CD4-positive, alpha-beta memory T cell (primary cell): ENCODE measurements at regions of chr2 and their contacts with region 1.

Region 1: DNA sequence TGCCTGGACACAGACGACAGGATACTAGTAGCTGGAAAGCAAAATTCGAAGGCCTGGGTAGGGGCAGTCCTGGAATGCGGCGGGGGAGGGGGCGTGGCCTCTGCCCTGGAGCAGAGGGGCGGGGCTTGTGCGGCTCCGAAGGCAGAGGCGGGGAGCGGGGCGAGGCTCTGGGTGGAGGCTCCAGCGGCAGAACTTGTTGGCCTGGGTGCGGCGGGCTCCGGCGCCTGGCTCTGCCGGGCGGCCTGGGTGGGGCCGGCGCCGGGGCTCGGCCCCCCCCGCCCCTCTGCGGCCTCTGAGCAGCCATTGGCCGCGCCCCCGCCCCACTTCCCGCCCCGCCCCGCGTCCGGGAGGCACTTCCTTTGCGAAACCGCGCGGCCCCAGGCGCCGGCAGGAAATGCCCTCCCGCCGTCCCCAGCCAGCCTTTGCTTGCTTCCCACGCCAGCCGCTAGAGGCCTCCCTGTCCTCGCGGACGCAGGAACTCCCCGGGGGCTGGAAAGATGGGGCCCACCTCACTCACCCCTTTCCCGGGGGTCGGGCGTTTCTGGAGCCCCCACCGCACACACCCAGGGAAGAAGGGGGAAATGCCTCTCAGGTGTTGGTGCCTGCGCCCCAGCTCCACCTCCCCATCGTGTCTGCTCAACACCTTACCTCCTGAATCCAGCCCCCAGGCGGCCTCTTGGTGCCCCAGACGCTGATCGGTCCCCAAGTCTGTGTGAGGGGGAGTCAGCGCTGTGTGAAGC is 6.7 kb downstream of the CTDSP1 start:
- DNase-seq: peak; percentile 88 to 92 (median 91)
- H3K4me3 ChIP-seq: peak overlapping the region; percentile 34 to 63
- H3K4me3 Mint-ChIP-seq: peak overlapping the region; percentile 80 to 91 (median 87)
- H3K27ac ChIP-seq: peak overlapping the region; percentile 71
- H3K27ac Mint-ChIP-seq: peak overlapping the region; percentile 93 to 100 (median 96)
- H3K4me1 ChIP-seq: peaks cover 62% of the 10 kb centered on the region
- H3K4me1 Mint-ChIP-seq: peaks cover 32 to 67% (median 50%) of the 10 kb centered on the region in 4 donors
- H3K27me3 ChIP-seq: no peaks in the 10 kb centered on the region
- H3K27me3 Mint-ChIP-seq: no peaks in the 10 kb centered on the region

Region 2: GRCh38 chr2:218003981-218004419 is 402.4 kb before region 1 on chr2:
- CTCF ChIA-PET with region 1: no interaction called
- POLR2A ChIA-PET with region 1: no interaction called
- intact Hi-C with region 1: no loop called
- DNase-seq: no peak
- H3K4me3 ChIP-seq: no peak overlapping the region
- H3K4me3 Mint-ChIP-seq: no peak overlapping the region
- H3K27ac ChIP-seq: no peak overlapping the region
- H3K27ac Mint-ChIP-seq: no peak overlapping the region
- H3K4me1 ChIP-seq: no peaks in the 10 kb centered on the region
- H3K4me1 Mint-ChIP-seq: peaks cover 0 to 4% (median 0%) of the 10 kb centered on the region in 4 donors
- H3K27me3 ChIP-seq: no peaks in the 10 kb centered on the region
- H3K27me3 Mint-ChIP-seq: peaks cover 5 to 19% of the 10 kb centered on the region in 2 donors

Region 3: GRCh38 chr2:218292048-218293014 is 114.0 kb before region 1 on chr2 and contains the start of gene TMBIM1:
- CTCF ChIA-PET with region 1: no interaction called
- POLR2A ChIA-PET with region 1: interaction called, 42 read pairs
- intact Hi-C with region 1: no loop called
- DNase-seq: peak; percentile 73 to 86 (median 83)
- H3K4me3 ChIP-seq: peak within 1 kb of the TSS; percentile 74 to 78
- H3K4me3 Mint-ChIP-seq: peak within 1 kb of the TSS; percentile 90 to 97 (median 96)
- H3K27ac ChIP-seq: peak within 1 kb of the TSS; percentile 94
- H3K27ac Mint-ChIP-seq: peak within 1 kb of the TSS; percentile 98 to 100 (median 99)
- H3K4me1 ChIP-seq: peaks cover 56% of the 10 kb centered on the region
- H3K4me1 Mint-ChIP-seq: peaks cover 32 to 75% (median 51%) of the 10 kb centered on the region in 4 donors
- H3K27me3 ChIP-seq: no peaks in the 10 kb centered on the region
- H3K27me3 Mint-ChIP-seq: no peaks in the 10 kb centered on the region
- total RNA-seq, gene TMBIM1: 140 to 144 TPM

Region 4: DNA sequence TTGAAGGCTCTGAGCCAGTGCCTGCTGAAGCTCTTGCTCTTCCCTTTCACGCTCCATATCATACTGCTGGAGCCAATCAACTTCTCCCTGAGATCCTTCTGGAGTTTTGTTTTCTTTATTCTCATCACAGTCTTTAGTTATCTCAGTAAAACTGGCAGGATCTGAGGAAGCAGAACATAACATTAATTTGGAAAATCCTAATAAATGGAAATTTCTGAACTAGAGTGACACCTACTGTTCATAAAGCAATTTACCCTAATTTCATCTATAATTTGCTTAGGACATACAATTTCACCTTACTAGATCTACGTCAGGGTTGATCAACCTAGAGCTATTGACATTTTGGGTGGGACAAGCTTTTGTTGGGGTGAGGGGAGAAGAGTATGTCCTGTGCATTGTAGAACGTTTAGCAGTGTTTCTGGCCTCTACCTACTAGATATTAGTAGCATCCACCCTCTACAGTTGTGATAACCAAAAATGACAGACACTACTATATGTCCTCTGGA is 59.7 kb after region 1 on chr2:
- CTCF ChIA-PET with region 1: interaction called, 10 read pairs
- POLR2A ChIA-PET with region 1: interaction called, 4 read pairs
- intact Hi-C with region 1: loop called (anchors 1 kb)
- DNase-seq: peak in 4 of 5 donors; percentile 11 to 15 (median 14)
- H3K4me3 ChIP-seq: no peak overlapping the region
- H3K4me3 Mint-ChIP-seq: no peak overlapping the region
- H3K27ac ChIP-seq: no peak overlapping the region
- H3K27ac Mint-ChIP-seq: peak overlapping the region in 6 of 7 donors; percentile 20 to 78 (median 47)
- H3K4me1 ChIP-seq: peaks cover 7% of the 10 kb centered on the region
- H3K4me1 Mint-ChIP-seq: peaks cover 6 to 12% (median 8%) of the 10 kb centered on the region in 4 donors
- H3K27me3 ChIP-seq: no peaks in the 10 kb centered on the region
- H3K27me3 Mint-ChIP-seq: no peaks in the 10 kb centered on the region

Region 5: DNA sequence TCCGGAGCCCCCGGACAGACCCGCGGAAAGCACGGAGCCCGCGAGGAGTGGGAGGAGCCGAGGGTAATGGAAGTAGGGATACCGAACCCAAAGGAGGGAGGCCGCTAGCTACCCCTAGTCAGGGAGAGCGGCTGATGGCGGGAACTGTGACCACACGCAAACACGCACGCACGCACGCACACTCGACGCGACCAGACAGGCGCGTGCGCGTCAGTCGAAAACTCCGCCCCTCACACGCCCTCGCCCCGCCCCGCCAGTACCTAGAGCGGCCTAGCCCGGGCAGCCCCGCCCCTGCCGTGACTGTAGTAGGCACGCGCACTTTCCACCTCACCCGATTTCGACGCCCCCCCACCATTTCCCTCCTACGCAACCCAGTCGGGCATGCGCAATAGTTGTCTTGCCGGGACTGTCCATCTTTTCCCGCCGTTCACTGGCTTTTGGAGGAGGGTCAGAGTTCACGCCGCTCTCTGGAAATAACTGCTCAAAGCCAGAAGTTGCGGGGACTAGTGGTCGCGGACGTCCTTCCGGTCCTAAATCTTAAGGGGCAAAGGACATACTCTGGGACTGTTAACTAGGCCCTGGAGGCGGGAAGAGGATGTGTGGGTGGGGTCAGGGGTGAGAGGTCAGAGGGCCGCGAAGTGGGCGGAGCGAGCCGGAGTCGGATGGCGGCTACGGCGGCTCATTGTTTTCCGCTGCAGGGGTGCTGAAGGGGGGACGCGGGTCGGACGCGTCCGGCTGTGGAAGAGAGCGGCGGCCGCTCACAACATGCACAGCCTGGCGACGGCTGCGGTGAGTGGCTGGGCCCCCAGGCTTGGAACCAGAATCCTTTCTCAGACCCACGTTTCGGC is 162.0 kb after region 1 on chr2 and contains the starts of genes CNOT9 and USP37:
- CTCF ChIA-PET with region 1: no interaction called
- POLR2A ChIA-PET with region 1: interaction called, 5 read pairs
- intact Hi-C with region 1: loop called (anchors 1 kb)
- DNase-seq: peak; percentile 99 to 100 (median 100)
- H3K4me3 ChIP-seq: peak within 1 kb of the TSS; percentile 67 to 84
- H3K4me3 Mint-ChIP-seq: peak within 1 kb of the TSS; percentile 90 to 99 (median 97)
- H3K27ac ChIP-seq: peak within 1 kb of the TSS; percentile 99
- H3K27ac Mint-ChIP-seq: peak within 1 kb of the TSS; percentile 96 to 100 (median 100)
- H3K4me1 ChIP-seq: peaks cover 43% of the 10 kb centered on the region
- H3K4me1 Mint-ChIP-seq: peaks cover 48 to 78% (median 57%) of the 10 kb centered on the region in 4 donors
- H3K27me3 ChIP-seq: no peaks in the 10 kb centered on the region
- H3K27me3 Mint-ChIP-seq: no peaks in the 10 kb centered on the region
- total RNA-seq, gene CNOT9: 53.9 to 58.0 TPM
- total RNA-seq, gene USP37: 28.2 to 29.1 TPM

Region 6: GRCh38 chr2:218659258-218659987 is 253.0 kb after region 1 on chr2 and contains the starts of genes BCS1L and ZNF142:
- CTCF ChIA-PET with region 1: no interaction called
- POLR2A ChIA-PET with region 1: interaction called, 13 read pairs
- intact Hi-C with region 1: no loop called
- DNase-seq: peak; percentile 90 to 94 (median 92)
- H3K4me3 ChIP-seq: peak within 1 kb of the TSS; percentile 50 to 78
- H3K4me3 Mint-ChIP-seq: peak within 1 kb of the TSS; percentile 91 to 100 (median 93)
- H3K27ac ChIP-seq: peak within 1 kb of the TSS; percentile 71
- H3K27ac Mint-ChIP-seq: peak within 1 kb of the TSS; percentile 92 to 98 (median 94)
- H3K4me1 ChIP-seq: peaks cover 28% of the 10 kb centered on the region
- H3K4me1 Mint-ChIP-seq: peaks cover 17 to 37% (median 31%) of the 10 kb centered on the region in 4 donors
- H3K27me3 ChIP-seq: no peaks in the 10 kb centered on the region
- H3K27me3 Mint-ChIP-seq: no peaks in the 10 kb centered on the region
- total RNA-seq, gene BCS1L: 53.0 to 57.2 TPM
- total RNA-seq, gene ZNF142: 44.4 to 54.5 TPM

Region 7: DNA sequence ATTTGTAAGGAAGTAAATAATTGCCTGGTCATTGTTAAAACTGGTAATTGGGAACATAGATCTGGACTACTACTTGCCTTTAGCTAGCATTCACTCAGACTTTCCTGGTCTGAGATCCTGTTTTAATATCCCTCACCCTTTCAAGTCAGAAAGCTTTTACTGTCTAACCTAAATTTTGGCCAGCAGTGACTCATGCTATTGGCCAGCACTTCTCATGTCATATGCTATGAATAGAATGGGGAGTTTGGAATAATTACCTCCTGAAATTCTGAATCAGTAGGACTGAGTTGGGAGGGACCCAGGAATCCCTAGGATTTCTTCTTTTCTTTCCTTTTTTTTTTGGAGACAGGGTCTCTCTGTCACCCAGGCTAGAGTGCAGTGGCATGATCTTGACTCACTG is 284.9 kb after region 1 on chr2:
- CTCF ChIA-PET with region 1: interaction called, 3 read pairs
- POLR2A ChIA-PET with region 1: no interaction called
- intact Hi-C with region 1: loop called (anchors 5 kb)
- DNase-seq: no peak
- H3K4me3 ChIP-seq: no peak overlapping the region
- H3K4me3 Mint-ChIP-seq: no peak overlapping the region
- H3K27ac ChIP-seq: no peak overlapping the region
- H3K27ac Mint-ChIP-seq: no peak overlapping the region
- H3K4me1 ChIP-seq: no peaks in the 10 kb centered on the region
- H3K4me1 Mint-ChIP-seq: peaks cover 0 to 4% (median 2%) of the 10 kb centered on the region in 4 donors
- H3K27me3 ChIP-seq: no peaks in the 10 kb centered on the region
- H3K27me3 Mint-ChIP-seq: no peaks in the 10 kb centered on the region